Mammary epithelial cell (primary cell): ENCODE measurements at regions of chr6 and their contacts with region 1.

Region 1: DNA sequence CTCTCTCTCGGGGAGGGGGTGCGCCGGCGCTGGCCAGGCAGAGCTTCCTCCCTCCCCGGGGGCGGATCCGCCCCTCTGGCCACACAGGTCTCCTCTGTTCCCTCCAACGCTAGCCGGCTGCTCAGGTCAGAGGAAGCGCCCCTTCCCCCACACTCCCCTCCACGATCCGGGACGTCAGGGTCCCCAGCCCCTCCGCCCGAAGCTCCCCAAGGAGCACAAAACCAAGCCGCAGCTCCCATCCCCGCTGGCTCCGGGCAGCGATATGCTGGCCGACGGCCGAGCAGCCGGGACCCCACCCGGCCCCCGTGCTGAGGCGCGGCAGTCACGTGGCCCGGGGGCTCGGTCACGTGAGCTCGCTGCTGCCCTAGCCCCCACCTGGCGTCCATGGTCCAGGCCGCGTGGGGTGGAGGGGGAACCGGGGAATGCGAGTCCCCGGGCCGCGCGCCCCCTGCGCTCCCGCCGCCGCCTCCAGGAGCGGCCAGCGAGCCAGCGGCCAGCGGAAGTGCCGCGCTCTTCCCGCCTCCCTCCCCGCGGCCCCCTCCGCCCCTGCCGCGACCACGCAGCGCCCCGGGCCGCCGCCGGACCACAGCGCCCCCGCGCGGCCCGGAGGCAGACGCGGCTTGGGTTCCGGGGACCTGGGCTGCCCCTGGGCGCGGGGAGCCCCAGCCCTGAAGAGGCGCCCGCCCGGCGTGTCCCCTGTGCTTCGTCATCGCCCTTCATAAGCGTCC is at the start of gene SLC35B2:
- DNase-seq: peak; percentile 65
- H3K4me3 ChIP-seq: peak within 1 kb of the TSS; percentile 85 to 90 (median 87)
- H3K27ac ChIP-seq: peak within 1 kb of the TSS; percentile 69
- H3K4me1 ChIP-seq: peaks cover 8% of the 10 kb centered on the region
- H3K27me3 ChIP-seq: no peaks in the 10 kb centered on the region
- CTCF ChIP-seq: peak; percentile 36 to 53
- total RNA-seq, gene SLC35B2: 72.6 to 76.3 TPM

Region 2: DNA sequence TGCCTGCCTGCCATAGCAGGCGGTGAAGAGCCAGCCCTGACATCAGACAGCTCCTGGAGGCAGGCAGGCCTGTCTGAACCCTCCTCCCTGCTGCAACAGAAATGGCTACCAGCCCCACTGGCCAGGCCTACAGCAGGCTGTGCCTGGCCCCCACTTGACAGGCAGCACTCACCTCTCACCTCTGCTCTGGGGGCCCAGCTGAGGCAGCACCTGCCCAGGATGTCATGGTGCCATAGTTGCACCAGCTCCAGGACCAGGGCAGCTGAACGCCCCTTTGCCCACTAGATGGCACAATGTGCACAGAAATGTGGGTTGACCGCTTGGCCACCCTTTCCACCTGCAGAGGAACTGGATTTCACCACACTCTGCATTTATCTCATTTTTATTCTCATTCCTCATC is 160.6 kb before region 1 on chr6:
- CTCF ChIA-PET with region 1: no interaction called
- dilution Hi-C with region 1: no loop called
- in situ Hi-C with region 1: no loop called
- intact Hi-C with region 1: loop called (anchors 2 kb)
- DNase-seq: peak; percentile 61
- H3K4me3 ChIP-seq: no peak overlapping the region
- H3K27ac ChIP-seq: no peak overlapping the region
- H3K4me1 ChIP-seq: no peaks in the 10 kb centered on the region
- H3K27me3 ChIP-seq: no peaks in the 10 kb centered on the region
- CTCF ChIP-seq: peak; percentile 85 to 87

Region 3: DNA sequence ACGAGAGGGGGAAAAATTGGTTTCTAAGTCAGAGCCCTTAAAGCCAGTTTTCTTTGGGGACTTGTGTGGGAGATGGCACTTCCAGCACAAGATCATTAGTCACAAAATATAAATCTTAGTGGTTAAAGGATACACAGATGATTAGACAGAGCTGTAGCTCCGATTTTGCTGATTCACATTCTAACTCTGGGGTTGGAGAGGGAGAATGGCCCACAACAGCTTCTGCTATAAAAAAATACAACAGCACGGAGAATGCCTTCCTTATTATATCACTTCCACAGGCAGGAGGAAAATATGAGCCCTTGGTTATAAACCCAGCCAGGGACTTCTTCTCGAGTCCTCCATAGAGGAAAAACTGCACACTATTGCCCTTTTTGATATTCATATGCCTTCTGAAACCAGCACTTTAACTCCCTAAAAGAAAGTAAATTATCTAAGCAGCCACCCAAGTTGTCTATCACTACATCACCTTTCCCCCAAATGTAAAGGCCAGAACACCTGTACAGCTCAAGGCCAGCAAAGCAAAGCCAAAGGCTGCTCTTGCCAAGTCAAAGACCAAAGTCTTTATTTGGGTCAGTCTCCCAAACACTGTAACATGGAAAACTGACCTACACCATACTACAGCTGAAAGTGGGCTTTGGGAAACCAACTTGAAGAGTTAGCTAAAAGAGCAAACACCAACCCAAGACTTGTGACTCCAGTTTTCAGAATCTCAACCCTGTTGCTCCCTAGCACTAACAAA is 140.4 kb before region 1 on chr6:
- CTCF ChIA-PET with region 1: no interaction called
- dilution Hi-C with region 1: no loop called
- in situ Hi-C with region 1: no loop called
- intact Hi-C with region 1: loop called (anchors 5 kb)
- DNase-seq: peak; percentile 74
- H3K4me3 ChIP-seq: no peak overlapping the region
- H3K27ac ChIP-seq: peak overlapping the region; percentile 86
- H3K4me1 ChIP-seq: peaks cover 53% of the 10 kb centered on the region
- H3K27me3 ChIP-seq: no peaks in the 10 kb centered on the region
- CTCF ChIP-seq: no peak

Region 4: DNA sequence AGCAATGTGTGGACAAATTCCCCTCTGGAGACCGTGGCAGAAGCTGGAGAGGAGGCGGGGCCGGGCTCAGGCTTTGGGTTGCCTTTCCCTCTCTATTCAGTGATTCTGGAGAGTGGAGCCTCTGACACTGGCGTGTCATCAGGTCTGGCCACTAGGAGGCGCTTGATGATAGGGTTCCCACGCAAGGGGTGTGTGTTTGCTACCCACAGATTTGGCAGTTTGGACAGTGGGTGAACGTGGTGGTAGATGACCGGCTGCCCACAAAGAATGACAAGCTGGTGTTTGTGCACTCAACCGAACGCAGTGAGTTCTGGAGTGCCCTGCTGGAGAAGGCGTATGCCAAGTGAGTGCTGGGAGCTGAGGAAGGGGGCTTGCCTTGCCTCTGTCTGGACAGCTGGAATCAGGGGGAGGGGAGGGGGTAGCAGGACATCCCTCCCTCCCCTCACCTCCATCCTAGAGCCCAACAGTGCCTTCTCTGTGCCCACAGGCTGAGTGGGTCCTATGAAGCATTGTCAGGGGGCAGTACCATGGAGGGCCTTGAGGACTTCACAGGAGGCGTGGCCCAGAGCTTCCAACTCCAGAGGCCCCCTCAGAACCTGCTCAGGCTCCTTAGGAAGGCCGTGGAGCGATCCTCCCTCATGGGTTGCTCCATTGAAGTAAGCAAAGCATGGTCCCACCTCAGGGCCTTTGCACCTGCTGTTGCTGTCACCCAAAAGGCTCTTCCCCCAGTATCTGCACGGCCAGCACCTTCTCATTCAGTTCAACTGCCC is 84.3 kb before region 1 on chr6:
- CTCF ChIA-PET with region 1: interaction called, 3 read pairs
- dilution Hi-C with region 1: no loop called
- in situ Hi-C with region 1: no loop called
- intact Hi-C with region 1: loop called (anchors 1 kb)
- DNase-seq: peak; percentile 69
- H3K4me3 ChIP-seq: no peak overlapping the region
- H3K27ac ChIP-seq: no peak overlapping the region
- H3K4me1 ChIP-seq: peaks cover 7% of the 10 kb centered on the region
- H3K27me3 ChIP-seq: no peaks in the 10 kb centered on the region
- CTCF ChIP-seq: peak; percentile 92 to 94

Region 5: DNA sequence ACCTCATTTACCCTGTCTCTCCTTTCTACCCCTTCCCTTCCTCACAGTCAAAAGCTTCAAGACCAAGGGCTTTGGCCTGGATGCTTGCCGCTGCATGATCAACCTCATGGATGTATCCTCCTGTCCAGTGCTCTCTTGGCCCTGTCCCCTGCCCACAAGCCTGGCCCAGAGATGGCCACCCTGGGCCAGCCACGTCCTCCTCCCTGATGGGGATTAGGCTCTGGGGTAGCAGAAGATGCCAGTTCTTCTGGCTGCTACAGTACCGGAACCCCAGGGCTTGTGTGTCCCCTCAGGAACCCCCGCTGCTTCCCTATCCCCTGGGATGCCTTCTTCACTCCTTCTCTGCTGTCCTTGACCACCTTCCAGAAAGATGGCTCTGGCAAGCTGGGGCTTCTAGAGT is 76.3 kb before region 1 on chr6:
- CTCF ChIA-PET with region 1: no interaction called
- dilution Hi-C with region 1: loop called (anchors 5 kb)
- in situ Hi-C with region 1: no loop called
- intact Hi-C with region 1: no loop called
- DNase-seq: no peak
- H3K4me3 ChIP-seq: no peak overlapping the region
- H3K27ac ChIP-seq: no peak overlapping the region
- H3K4me1 ChIP-seq: peaks cover 8% of the 10 kb centered on the region
- H3K27me3 ChIP-seq: no peaks in the 10 kb centered on the region
- CTCF ChIP-seq: no peak

Region 6: DNA sequence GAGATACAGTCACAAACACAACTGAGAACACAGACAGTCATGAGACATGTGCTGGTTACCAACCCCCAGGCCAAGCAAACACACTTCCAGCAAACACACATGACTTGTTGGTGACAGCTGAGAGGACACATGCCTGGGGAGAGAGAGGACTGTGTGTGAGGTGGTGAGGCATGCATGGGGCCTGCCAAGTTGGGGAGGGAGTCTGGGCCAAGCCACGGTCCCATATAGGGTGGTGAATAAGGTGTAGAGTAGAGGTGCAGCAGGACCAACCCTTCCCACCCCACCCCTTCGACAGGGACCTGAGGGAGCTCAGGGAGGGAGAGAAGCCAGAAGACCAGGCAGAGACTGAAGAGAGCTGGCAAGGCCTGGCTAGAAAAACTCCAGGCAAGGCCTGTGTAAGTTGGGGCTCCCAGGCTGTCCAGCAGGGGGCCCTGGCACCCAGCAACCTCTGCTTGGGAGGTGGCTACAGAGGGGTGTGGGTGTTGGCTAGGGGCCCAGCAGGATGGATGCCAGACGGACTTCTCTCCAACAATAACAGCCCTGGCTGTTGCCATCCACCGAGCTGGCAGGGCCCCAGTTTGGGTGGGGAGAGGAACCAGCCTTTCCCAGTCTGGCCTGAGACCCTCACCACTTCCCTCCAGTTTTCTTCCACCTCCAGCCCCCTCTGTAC is 35.8 kb before region 1 on chr6:
- CTCF ChIA-PET with region 1: interaction called, 3 read pairs
- dilution Hi-C with region 1: no loop called
- in situ Hi-C with region 1: no loop called
- intact Hi-C with region 1: loop called (anchors 2 kb)
- DNase-seq: peak; percentile 81
- H3K4me3 ChIP-seq: no peak overlapping the region
- H3K27ac ChIP-seq: no peak overlapping the region
- H3K4me1 ChIP-seq: peaks cover 57% of the 10 kb centered on the region
- H3K27me3 ChIP-seq: no peaks in the 10 kb centered on the region
- CTCF ChIP-seq: peak; percentile 86 to 95

Region 7: DNA sequence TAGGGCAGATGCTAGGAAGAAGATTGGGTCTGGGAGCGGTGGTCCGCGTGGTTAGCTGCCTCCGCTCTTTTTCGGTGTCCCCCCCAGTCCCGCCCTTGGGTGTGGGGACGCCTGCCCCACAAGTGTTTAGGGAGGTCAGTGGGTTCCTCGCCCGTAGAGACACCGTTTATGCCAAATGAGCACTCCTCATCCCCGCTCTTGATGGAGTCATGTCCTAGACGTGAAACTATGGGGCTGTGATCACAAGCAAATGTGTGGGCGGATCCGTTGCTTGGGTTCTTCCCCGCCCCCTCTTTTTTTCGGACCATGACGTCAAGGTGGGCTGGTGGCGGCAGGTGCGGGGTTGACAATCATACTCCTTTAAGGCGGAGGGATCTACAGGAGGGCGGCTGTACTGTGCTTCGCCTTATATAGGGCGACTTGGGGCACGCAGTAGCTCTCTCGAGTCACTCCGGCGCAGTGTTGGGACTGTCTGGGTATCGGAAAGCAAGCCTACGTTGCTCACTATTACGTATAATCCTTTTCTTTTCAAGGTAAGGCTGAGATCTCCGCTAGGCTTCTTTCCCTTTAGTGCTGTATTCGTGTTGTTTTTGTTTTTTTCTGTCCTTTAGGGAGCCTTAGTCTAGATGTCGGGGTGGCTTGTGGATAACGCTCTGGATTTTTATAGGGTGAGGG is 10.4 kb before region 1 on chr6 and contains the start of gene HSP90AB1:
- CTCF ChIA-PET with region 1: no interaction called
- dilution Hi-C with region 1: no loop called
- in situ Hi-C with region 1: no loop called
- intact Hi-C with region 1: loop called (anchors 1 kb)
- DNase-seq: peak; percentile 98
- H3K4me3 ChIP-seq: peak within 1 kb of the TSS; percentile 75 to 89 (median 81)
- H3K27ac ChIP-seq: peak within 1 kb of the TSS; percentile 93
- H3K4me1 ChIP-seq: peaks cover 37% of the 10 kb centered on the region
- H3K27me3 ChIP-seq: no peaks in the 10 kb centered on the region
- CTCF ChIP-seq: no peak
- total RNA-seq, gene HSP90AB1: 872 to 986 TPM